ENCODE measurements at regions of chr9 and their contacts with region 1.

Region 1: DNA sequence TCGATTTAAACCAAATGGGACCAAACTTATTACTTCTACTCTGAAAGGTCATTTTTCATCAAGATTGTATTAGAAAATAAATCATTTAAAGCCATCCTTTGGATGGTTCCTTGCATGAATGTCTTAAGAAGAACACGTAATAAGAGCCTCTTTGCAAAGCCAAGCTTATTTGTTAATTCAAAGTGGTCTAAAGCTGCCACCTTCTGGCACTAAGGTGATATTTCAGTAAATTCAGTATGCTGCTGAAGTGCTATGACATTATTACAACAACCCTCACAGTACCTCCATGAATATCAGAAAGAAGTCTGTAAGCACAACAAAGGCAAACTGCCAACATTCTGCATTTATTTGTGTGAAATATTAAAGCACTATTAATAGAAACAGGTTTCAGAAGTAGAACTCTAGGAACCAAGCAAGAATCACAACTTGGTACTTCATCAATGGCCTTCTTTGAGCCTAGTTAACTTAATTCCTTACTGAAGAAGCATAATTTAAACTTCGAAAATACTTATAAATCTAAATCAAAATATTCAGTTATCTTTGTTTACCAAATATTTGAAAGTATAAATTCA is 53.1 kb upstream of the TYRP1 start:
- DNase-seq: peak; percentile 5
- H3K4me3 ChIP-seq: no peak overlapping the region; a peak in 1 of 4 replicates
- H3K27ac ChIP-seq: no peak overlapping the region
- H3K4me1 ChIP-seq: no peaks in the 10 kb centered on the region
- H3K27me3 ChIP-seq: no peaks in the 10 kb centered on the region
- CTCF ChIP-seq: peak; percentile 64
- EP300 ChIP-seq: no peak
- RAD21 ChIP-seq: peak; percentile 81

Region 2: DNA sequence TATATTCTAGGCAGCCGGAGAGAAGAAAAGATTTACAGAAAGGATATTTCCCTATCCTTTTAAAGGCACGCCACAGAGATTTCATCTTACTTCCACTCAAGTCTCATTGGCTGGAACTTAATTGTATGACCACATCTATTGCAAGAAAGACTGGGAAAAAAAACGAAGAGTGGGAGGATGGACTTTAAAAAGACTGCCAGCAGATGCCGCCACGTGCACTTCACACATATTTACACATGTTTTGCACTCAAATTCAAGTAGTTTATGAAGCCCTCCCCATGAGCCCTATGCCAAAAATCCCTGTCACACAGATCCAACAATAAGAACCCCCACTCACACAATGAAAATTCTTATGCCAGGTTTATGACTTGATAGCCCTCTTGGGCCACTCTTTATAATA is 85.5 kb before region 1 on chr9:
- CTCF ChIA-PET with region 1: interaction called, 38 read pairs
- POLR2A ChIA-PET with region 1: no interaction called
- DNase-seq: peak; percentile 6
- H3K4me3 ChIP-seq: no peak overlapping the region
- H3K27ac ChIP-seq: no peak overlapping the region
- H3K4me1 ChIP-seq: no peaks in the 10 kb centered on the region
- H3K27me3 ChIP-seq: no peaks in the 10 kb centered on the region
- CTCF ChIP-seq: peak; percentile 33
- EP300 ChIP-seq: no peak
- RAD21 ChIP-seq: peak; percentile 38